ENCODE measurements at regions of chr2 and their contacts with region 1.

Region 1: GRCh38 chr2:186503848-186504606 is 18.0 kb downstream of the ZC3H15 start:
- DNase-seq: no peak
- ATAC-seq: peak; percentile 38

Region 2: GRCh38 chr2:186209532-186209931 is 294.5 kb before region 1 on chr2:
- intact Hi-C with region 1: no loop called
- DNase-seq: no peak
- ATAC-seq: no peak

Region 3: DNA sequence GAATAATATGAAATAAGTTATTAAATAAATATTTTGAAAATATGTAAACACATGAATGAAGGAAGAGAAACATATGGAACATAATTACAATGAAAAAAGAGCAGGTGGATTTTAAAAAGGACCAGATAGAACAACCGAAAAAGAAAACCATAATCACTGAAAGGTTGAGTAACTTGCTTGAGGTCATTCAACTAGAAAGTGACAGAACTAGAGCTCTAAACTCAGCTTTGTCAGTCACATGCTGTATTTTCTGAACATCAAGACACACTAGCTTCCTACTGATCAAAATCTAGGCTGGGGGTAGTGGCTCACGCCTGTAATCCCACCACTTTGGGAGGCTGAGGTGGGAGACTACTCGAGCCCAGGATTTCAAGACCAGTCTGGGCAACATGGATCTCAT is 55.8 kb after region 1 on chr2:
- intact Hi-C with region 1: no loop called
- DNase-seq: no peak
- ATAC-seq: no peak

Region 4: DNA sequence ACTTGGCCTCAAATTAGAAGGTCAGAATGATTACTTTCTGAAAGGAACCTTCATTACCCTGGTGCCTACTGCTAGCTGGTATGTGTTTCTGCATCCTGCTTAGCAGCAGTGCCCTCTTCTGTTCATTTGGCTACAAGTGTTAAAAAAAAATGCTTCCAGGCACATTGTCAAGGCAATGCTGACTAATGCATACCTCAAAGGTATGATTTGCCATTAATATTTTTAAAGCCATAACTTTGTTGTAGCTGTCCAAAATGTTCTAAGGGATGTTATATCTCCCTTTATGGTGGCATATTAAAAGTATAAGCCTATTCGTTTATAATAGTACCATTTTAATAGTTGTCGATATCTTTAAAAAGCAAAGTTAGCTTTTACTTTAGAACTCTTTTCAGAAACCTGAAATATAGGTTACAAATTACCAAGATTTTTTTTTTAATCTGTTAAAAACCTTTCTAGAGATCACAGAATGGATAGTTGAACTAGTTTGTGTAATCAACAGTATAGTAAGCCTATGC is 137.8 kb after region 1 on chr2:
- intact Hi-C with region 1: loop called (anchors 2 kb)
- DNase-seq: no peak
- ATAC-seq: peak; percentile 92

Measured in Right ventricle myocardium superior (tissue), 1 donor.